Cardiac septum (tissue), 1 donor: ENCODE measurements at regions of chr1 and their contacts with region 1.

Region 1: GRCh38 chr1:112715264-112716053 is at the start of gene PPM1J:
- DNase-seq: peak; percentile 99
- total RNA-seq, gene PPM1J: 10.7 TPM

Region 2: GRCh38 chr1:112700290-112701226 is 14.9 kb before region 1 on chr1:
- intact Hi-C with region 1: loop called (anchors 1 kb)
- DNase-seq: peak; percentile 99

Region 3: DNA sequence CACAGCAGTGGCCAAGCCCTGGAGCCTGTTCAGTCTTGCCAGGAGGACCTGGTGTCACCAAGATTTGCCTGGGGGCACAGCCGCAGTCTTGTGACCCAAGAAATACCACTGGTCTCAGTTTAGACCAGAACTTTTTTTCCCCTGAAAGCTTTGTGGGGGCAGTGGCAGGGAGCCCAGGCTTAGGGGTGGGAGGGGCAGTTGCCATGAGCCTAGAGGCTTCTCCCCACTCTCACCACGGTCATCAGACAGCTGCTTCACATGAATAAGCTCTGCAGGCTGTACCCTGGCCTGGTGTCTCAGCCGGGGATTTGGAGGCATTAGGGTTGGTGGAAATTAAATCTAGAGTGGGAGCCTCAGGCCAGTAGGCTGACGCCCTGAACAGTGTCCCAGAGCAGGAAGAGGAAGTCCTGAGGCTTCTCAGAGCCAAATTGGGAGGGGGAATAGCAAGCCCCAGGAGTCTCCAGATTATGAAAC is 166.8 kb after region 1 on chr1:
- intact Hi-C with region 1: loop called (anchors 5 kb)
- DNase-seq: no peak

Region 4: GRCh38 chr1:113042285-113043143 is 327.1 kb after region 1 on chr1:
- intact Hi-C with region 1: loop called (anchors 1 kb)
- DNase-seq: peak; percentile 82